ENCODE measurements at regions of chr12 and their contacts with region 1.

Region 1: DNA sequence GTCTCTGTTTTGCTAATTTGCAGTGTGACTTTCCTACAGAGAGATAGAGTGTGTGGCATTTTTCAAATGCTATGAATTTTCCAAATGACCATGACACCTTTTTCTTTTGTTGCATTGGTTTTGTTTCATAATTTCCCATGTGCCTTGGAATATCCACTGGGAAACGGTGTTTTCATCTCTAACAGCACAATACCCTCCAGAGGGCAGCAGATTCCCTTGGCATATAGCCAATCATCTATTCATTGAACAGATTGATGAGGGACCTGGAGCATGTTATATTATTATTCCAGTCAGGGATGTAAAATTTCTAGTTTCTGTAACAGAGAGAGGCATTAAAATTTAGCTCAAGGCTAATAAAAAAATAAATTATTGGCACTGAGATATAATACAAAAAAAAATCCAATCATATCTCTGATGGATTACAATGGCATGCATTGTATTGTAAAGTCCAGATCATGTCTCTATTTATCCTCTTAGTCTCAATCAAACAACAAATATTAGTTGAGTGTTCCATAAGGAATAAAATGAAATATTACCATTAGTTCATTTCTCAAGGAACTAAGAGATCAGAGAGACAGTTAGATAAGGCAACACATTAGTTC is 29.6 kb upstream of the NTN4 start:
- DNase-seq: peak; percentile 62
- ATAC-seq: peak; percentile 43
- H3K4me3 ChIP-seq: no peak overlapping the region
- H3K27ac ChIP-seq: no peak overlapping the region
- H3K4me1 ChIP-seq: peaks cover 9% of the 10 kb centered on the region; the same call in 1 of the 2 replicates
- H3K27me3 ChIP-seq: no peaks in the 10 kb centered on the region
- CTCF ChIP-seq: peak; percentile 75
- EP300 ChIP-seq: no peak
- POLR2A ChIP-seq: no peak
- RAD21 ChIP-seq: no peak

Region 2: DNA sequence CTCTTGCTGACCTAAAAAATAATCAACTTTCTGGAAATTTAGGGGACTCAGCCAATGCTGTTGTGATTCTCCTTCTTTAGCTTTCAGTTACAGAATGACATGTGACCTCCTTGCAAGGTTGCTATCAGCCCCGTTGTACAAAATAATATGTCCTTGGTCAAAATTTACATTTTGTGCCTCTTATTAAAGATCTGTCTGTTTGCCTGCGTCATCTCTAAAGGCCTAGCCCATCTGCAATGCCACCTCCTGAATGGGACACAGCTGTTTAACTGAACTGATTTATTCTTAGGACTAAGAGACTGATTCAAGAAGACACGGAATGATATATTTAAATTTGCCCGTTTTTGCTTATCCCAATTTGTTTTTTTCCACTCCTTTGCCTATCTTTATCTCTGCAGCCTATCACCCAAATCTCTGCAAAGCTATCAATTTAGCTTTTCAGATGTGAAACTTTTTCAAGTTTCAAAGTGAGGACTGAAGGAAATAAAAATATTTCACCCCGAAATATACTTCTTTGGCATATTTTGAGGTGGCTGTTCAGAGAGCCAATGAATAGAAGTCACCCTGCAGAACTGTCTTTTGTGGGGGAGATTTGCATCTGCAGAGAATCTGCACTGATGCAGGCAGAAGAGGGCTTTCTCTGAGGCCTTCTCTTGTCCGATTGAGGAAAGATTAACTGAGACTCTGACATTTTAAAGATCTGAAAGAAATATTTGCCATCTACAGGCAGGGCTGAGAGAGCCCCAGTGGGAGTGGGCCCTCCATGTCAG is 476.6 kb before region 1 on chr12:
- CTCF ChIA-PET with region 1: no interaction called
- POLR2A ChIA-PET with region 1: no interaction called
- in situ Hi-C with region 1: no loop called
- intact Hi-C with region 1: loop called (anchors 5 kb)
- DNase-seq: no peak
- ATAC-seq: no peak
- H3K4me3 ChIP-seq: no peak overlapping the region
- H3K27ac ChIP-seq: no peak overlapping the region
- H3K4me1 ChIP-seq: peaks cover 34% of the 10 kb centered on the region
- H3K27me3 ChIP-seq: no peaks in the 10 kb centered on the region
- CTCF ChIP-seq: no peak
- EP300 ChIP-seq: no peak
- POLR2A ChIP-seq: no peak
- RAD21 ChIP-seq: no peak

Region 3: GRCh38 chr12:95582230-95583058 is 237.8 kb before region 1 on chr12:
- CTCF ChIA-PET with region 1: interaction called, 26 read pairs
- POLR2A ChIA-PET with region 1: no interaction called
- in situ Hi-C with region 1: no loop called
- intact Hi-C with region 1: loop called (anchors 1 kb)
- DNase-seq: peak; percentile 37
- ATAC-seq: peak; percentile 67
- H3K4me3 ChIP-seq: no peak overlapping the region
- H3K27ac ChIP-seq: no peak overlapping the region
- H3K4me1 ChIP-seq: no peaks in the 10 kb centered on the region
- H3K27me3 ChIP-seq: no peaks in the 10 kb centered on the region
- CTCF ChIP-seq: peak; percentile 67
- EP300 ChIP-seq: no peak
- POLR2A ChIP-seq: no peak
- RAD21 ChIP-seq: peak; percentile 45; the same call in 1 of the 2 replicates

Region 4: GRCh38 chr12:95623585-95624042 is 196.6 kb before region 1 on chr12:
- CTCF ChIA-PET with region 1: interaction called, 16 read pairs
- POLR2A ChIA-PET with region 1: no interaction called
- in situ Hi-C with region 1: no loop called
- intact Hi-C with region 1: loop called (anchors 1 kb)
- DNase-seq: peak; percentile 73
- ATAC-seq: peak; percentile 96
- H3K4me3 ChIP-seq: no peak overlapping the region
- H3K27ac ChIP-seq: no peak overlapping the region
- H3K4me1 ChIP-seq: peaks cover 14% of the 10 kb centered on the region
- H3K27me3 ChIP-seq: no peaks in the 10 kb centered on the region
- CTCF ChIP-seq: peak; percentile 85
- EP300 ChIP-seq: no peak
- POLR2A ChIP-seq: no peak
- RAD21 ChIP-seq: peak; percentile 48; the same call in 1 of the 2 replicates

Region 5: GRCh38 chr12:95848575-95849388 is 28.6 kb after region 1 on chr12:
- CTCF ChIA-PET with region 1: interaction called, 18 read pairs
- POLR2A ChIA-PET with region 1: no interaction called
- in situ Hi-C with region 1: no loop called
- intact Hi-C with region 1: loop called (anchors 1 kb)
- DNase-seq: peak; percentile 51
- ATAC-seq: peak; percentile 89
- H3K4me3 ChIP-seq: peak overlapping the region; percentile 31 to 48 (median 33); a peak in 5 of 6 replicates
- H3K27ac ChIP-seq: no peak overlapping the region
- H3K4me1 ChIP-seq: peaks cover 7% of the 10 kb centered on the region
- H3K27me3 ChIP-seq: peaks cover 0 to 4% of the 10 kb centered on the region in 2 experiments; a peak in 1 of 5 replicates
- CTCF ChIP-seq: peak; percentile 68
- EP300 ChIP-seq: no peak
- POLR2A ChIP-seq: no peak
- RAD21 ChIP-seq: peak; percentile 57; the same call in 1 of the 2 replicates

Region 6: DNA sequence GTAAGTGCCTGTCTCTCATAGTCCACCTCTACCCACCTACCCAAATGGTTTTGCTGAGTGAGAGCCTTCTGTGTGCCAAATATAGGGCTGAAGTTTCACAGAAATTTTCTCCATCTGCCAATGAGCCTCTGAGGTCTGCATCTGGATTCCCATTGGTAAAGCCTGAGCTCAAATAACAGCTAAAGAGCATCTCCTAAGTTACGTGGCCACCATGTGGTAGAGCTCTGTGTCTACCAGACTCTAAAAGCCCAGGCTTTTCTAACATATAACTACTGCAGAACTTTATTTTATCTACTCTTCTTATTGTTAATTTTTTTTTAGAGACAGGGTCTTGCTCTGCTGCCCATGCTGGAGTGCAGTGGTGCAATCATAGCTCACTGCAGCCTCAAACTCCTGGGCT is 138.9 kb after region 1 on chr12:
- CTCF ChIA-PET with region 1: no interaction called
- POLR2A ChIA-PET with region 1: no interaction called
- in situ Hi-C with region 1: no loop called
- intact Hi-C with region 1: loop called (anchors 10 kb)
- DNase-seq: peak; percentile 59
- ATAC-seq: peak; percentile 89
- H3K4me3 ChIP-seq: no peak overlapping the region
- H3K27ac ChIP-seq: no peak overlapping the region
- H3K4me1 ChIP-seq: peaks cover 45% of the 10 kb centered on the region
- H3K27me3 ChIP-seq: no peaks in the 10 kb centered on the region
- CTCF ChIP-seq: peak; percentile 54
- EP300 ChIP-seq: no peak
- POLR2A ChIP-seq: no peak
- RAD21 ChIP-seq: peak; percentile 75; the same call in 1 of the 2 replicates

Measured in HepG2 (cell line).